ENCODE measurements at regions of chr15 and their contacts with region 1.

Region 1: GRCh38 chr15:87841426-87841998 is 415.0 kb downstream of the NTRK3 start:
- DNase-seq: no peak
- ATAC-seq: no peak
- H3K4me3 ChIP-seq: no peak overlapping the region
- H3K27ac ChIP-seq: no peak overlapping the region
- H3K4me1 ChIP-seq: no peaks in the 10 kb centered on the region
- H3K27me3 ChIP-seq: no peaks in the 10 kb centered on the region
- CTCF ChIP-seq: no peak
- POLR2A ChIP-seq: no peak

Region 2: GRCh38 chr15:87736401-87736800 is 105.1 kb before region 1 on chr15:
- intact Hi-C with region 1: no loop called
- DNase-seq: no peak
- ATAC-seq: no peak
- H3K4me3 ChIP-seq: no peak overlapping the region
- H3K27ac ChIP-seq: no peak overlapping the region
- H3K4me1 ChIP-seq: peaks cover 0 to 15% (median 2%) of the 10 kb centered on the region in 12 donors
- H3K27me3 ChIP-seq: peaks cover 0 to 4% (median 0%) of the 10 kb centered on the region in 9 donors
- CTCF ChIP-seq: no peak
- POLR2A ChIP-seq: no peak

Region 3: GRCh38 chr15:87902772-87903426 is 61.4 kb after region 1 on chr15:
- intact Hi-C with region 1: loop called in 1 of 10 experiments (anchors 10 kb)
- DNase-seq: peak in 1 of 5 donors; percentile 8
- ATAC-seq: peak in 1 of 4 donors; percentile 57
- H3K4me3 ChIP-seq: no peak overlapping the region
- H3K27ac ChIP-seq: peak overlapping the region in 2 of 12 donors; percentile 17 to 20
- H3K4me1 ChIP-seq: no peaks in the 10 kb centered on the region
- H3K27me3 ChIP-seq: no peaks in the 10 kb centered on the region
- CTCF ChIP-seq: no peak
- POLR2A ChIP-seq: no peak

Measured in heart left ventricle (tissue), 16 donors.